MCF 10A (cell line): ENCODE measurements at regions of chr12 and their contacts with region 1.

Region 1: GRCh38 chr12:4526923-4527546 is 11.7 kb upstream of the RAD51AP1 start:
- DNase-seq: peak; percentile 16
- H3K4me3 Mint-ChIP-seq: no peak overlapping the region
- H3K27ac Mint-ChIP-seq: no peak overlapping the region
- H3K4me1 Mint-ChIP-seq: no peaks in the 10 kb centered on the region
- H3K27me3 Mint-ChIP-seq: no peaks in the 10 kb centered on the region
- CTCF ChIP-seq: peak; percentile 31

Region 2: GRCh38 chr12:4356041-4356327 is 171.1 kb before region 1 on chr12:
- CTCF ChIA-PET with region 1: interaction called, 3 read pairs
- POLR2A ChIA-PET with region 1: no interaction called
- intact Hi-C with region 1: loop called (anchors 1 kb)
- DNase-seq: peak; percentile 32
- H3K4me3 Mint-ChIP-seq: no peak overlapping the region
- H3K27ac Mint-ChIP-seq: no peak overlapping the region
- H3K4me1 Mint-ChIP-seq: no peaks in the 10 kb centered on the region
- H3K27me3 Mint-ChIP-seq: no peaks in the 10 kb centered on the region
- CTCF ChIP-seq: peak; percentile 37